ENCODE measurements at regions of chr3 and their contacts with region 1.

Region 1: GRCh38 chr3:135736740-135737139 is 228.8 kb upstream of the PPP2R3A start:
- DNase-seq: peak; percentile 76
- ATAC-seq: peak; percentile 97
- H3K4me3 Mint-ChIP-seq: no peak overlapping the region
- H3K27ac Mint-ChIP-seq: no peak overlapping the region
- H3K4me1 Mint-ChIP-seq: peaks cover 13% of the 10 kb centered on the region
- H3K27me3 Mint-ChIP-seq: no peaks in the 10 kb centered on the region
- CTCF ChIP-seq: peak; percentile 42; the same call in 1 of the 2 replicates

Region 2: DNA sequence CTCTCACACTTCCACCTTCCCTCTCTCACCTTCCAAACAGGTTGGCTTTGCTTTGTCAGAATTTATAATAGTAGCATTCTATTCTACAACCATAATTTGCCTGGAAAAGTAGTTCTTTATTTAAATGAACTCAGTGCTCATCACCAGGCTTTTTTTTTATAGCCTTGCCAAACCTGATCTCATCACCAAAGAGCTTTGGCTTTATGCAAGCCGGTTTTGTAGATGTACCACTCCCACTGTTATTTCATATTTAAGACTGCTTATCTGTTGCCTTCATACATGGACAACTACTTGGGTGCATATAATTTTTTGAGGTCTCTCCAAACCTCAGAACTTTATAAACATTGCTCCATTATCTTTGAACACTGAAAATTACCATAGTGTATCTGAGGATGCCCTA is 17.3 kb before region 1 on chr3:
- CTCF ChIA-PET with region 1: interaction called, 10 read pairs
- POLR2A ChIA-PET with region 1: no interaction called
- DNase-seq: no peak
- ATAC-seq: no peak
- H3K4me3 Mint-ChIP-seq: no peak overlapping the region
- H3K27ac Mint-ChIP-seq: no peak overlapping the region
- H3K4me1 Mint-ChIP-seq: peaks cover 20% of the 10 kb centered on the region
- H3K27me3 Mint-ChIP-seq: no peaks in the 10 kb centered on the region
- CTCF ChIP-seq: no peak

Region 3: GRCh38 chr3:135752846-135753245 is 16.1 kb after region 1 on chr3:
- CTCF ChIA-PET with region 1: interaction called, 13 read pairs
- POLR2A ChIA-PET with region 1: no interaction called
- DNase-seq: peak; percentile 33
- ATAC-seq: no peak; the same call in 1 of the 2 replicates
- H3K4me3 Mint-ChIP-seq: no peak overlapping the region
- H3K27ac Mint-ChIP-seq: no peak overlapping the region
- H3K4me1 Mint-ChIP-seq: peaks cover 11% of the 10 kb centered on the region
- H3K27me3 Mint-ChIP-seq: no peaks in the 10 kb centered on the region; the same call in 1 of the 2 replicates
- CTCF ChIP-seq: no peak

Region 4: GRCh38 chr3:135762188-135762856 is 25.6 kb after region 1 on chr3:
- CTCF ChIA-PET with region 1: interaction called, 13 read pairs
- POLR2A ChIA-PET with region 1: no interaction called
- DNase-seq: peak; percentile 28
- ATAC-seq: peak; percentile 91
- H3K4me3 Mint-ChIP-seq: no peak overlapping the region
- H3K27ac Mint-ChIP-seq: no peak overlapping the region
- H3K4me1 Mint-ChIP-seq: peaks cover 12% of the 10 kb centered on the region
- H3K27me3 Mint-ChIP-seq: no peaks in the 10 kb centered on the region; the same call in 1 of the 2 replicates
- CTCF ChIP-seq: no peak

Region 5: GRCh38 chr3:135792174-135792573 is 55.4 kb after region 1 on chr3:
- CTCF ChIA-PET with region 1: interaction called, 31 read pairs
- POLR2A ChIA-PET with region 1: no interaction called
- DNase-seq: peak; percentile 30
- ATAC-seq: peak; percentile 39
- H3K4me3 Mint-ChIP-seq: no peak overlapping the region
- H3K27ac Mint-ChIP-seq: no peak overlapping the region
- H3K4me1 Mint-ChIP-seq: 0 out of 2 replicates have a peak, but pooled peaks cover 4% of the 10 kb centered on the region
- H3K27me3 Mint-ChIP-seq: no peaks in the 10 kb centered on the region
- CTCF ChIP-seq: no peak; the same call in 1 of the 2 replicates

Region 6: GRCh38 chr3:135895106-135895733 is 158.5 kb after region 1 on chr3:
- CTCF ChIA-PET with region 1: interaction called, 16 read pairs
- POLR2A ChIA-PET with region 1: no interaction called
- DNase-seq: peak; percentile 84
- ATAC-seq: peak; percentile 73
- H3K4me3 Mint-ChIP-seq: no peak overlapping the region
- H3K27ac Mint-ChIP-seq: no peak overlapping the region
- H3K4me1 Mint-ChIP-seq: peaks cover 13% of the 10 kb centered on the region
- H3K27me3 Mint-ChIP-seq: no peaks in the 10 kb centered on the region
- CTCF ChIP-seq: peak; percentile 68

Region 7: GRCh38 chr3:136042608-136043221 is 306.0 kb after region 1 on chr3:
- CTCF ChIA-PET with region 1: interaction called, 40 read pairs
- POLR2A ChIA-PET with region 1: no interaction called
- DNase-seq: no peak
- ATAC-seq: peak; percentile 46; the same call in 1 of the 2 replicates
- H3K4me3 Mint-ChIP-seq: no peak overlapping the region
- H3K27ac Mint-ChIP-seq: no peak overlapping the region
- H3K4me1 Mint-ChIP-seq: peaks cover 8% of the 10 kb centered on the region
- H3K27me3 Mint-ChIP-seq: no peaks in the 10 kb centered on the region
- CTCF ChIP-seq: no peak

Measured in WTC11 (cell line).